ENCODE measurements at regions of chr3 and their contacts with region 1.

Region 1: GRCh38 chr3:8324740-8325139 is 176.9 kb upstream of the LMCD1 start:
- DNase-seq: peak; percentile 22
- H3K4me3 Mint-ChIP-seq: no peak overlapping the region
- H3K27ac Mint-ChIP-seq: no peak overlapping the region
- H3K4me1 Mint-ChIP-seq: no peaks in the 10 kb centered on the region
- H3K27me3 Mint-ChIP-seq: peaks cover 7% of the 10 kb centered on the region

Region 2: GRCh38 chr3:8416965-8417364 is 92.2 kb after region 1 on chr3:
- intact Hi-C with region 1: loop called (anchors 1 kb)
- DNase-seq: no peak
- H3K4me3 Mint-ChIP-seq: no peak overlapping the region
- H3K27ac Mint-ChIP-seq: no peak overlapping the region
- H3K4me1 Mint-ChIP-seq: no peaks in the 10 kb centered on the region
- H3K27me3 Mint-ChIP-seq: no peaks in the 10 kb centered on the region

Measured in activated T-helper 2 cell treated with anti-CD3 and anti-CD28 coated beads, Interferon-gamma antibody, Interleukin-2, Interleukin-4, amounts not matched to agents 10 μg/mL and 5 μg/mL and 100 μg/mL, durations not matched to agents 14 hours and 24 hours and 36 hours (primary cell).